ENCODE measurements at regions of chr15 and their contacts with region 1.

Region 1: GRCh38 chr15:44633603-44634002 is 29.9 kb downstream of the SPG11 start:
- DNase-seq: no peak
- ATAC-seq: no peak
- H3K4me3 Mint-ChIP-seq: peak overlapping the region; percentile 35
- H3K27ac Mint-ChIP-seq: peak overlapping the region; percentile 82
- H3K4me1 Mint-ChIP-seq: peaks cover 8% of the 10 kb centered on the region
- H3K27me3 Mint-ChIP-seq: no peaks in the 10 kb centered on the region
- CTCF ChIP-seq: no peak

Region 2: GRCh38 chr15:44603126-44603525 is 30.5 kb before region 1 on chr15:
- CTCF ChIA-PET with region 1: no interaction called
- POLR2A ChIA-PET with region 1: no interaction called
- intact Hi-C with region 1: loop called (anchors 5 kb)
- DNase-seq: no peak
- ATAC-seq: no peak
- H3K4me3 Mint-ChIP-seq: no peak overlapping the region
- H3K27ac Mint-ChIP-seq: no peak overlapping the region
- H3K4me1 Mint-ChIP-seq: no peaks in the 10 kb centered on the region
- H3K27me3 Mint-ChIP-seq: no peaks in the 10 kb centered on the region
- CTCF ChIP-seq: no peak

Region 3: GRCh38 chr15:44620081-44620480 is 13.5 kb before region 1 on chr15:
- CTCF ChIA-PET with region 1: no interaction called
- POLR2A ChIA-PET with region 1: interaction called, 4 read pairs
- intact Hi-C with region 1: loop called (anchors 2 kb)
- DNase-seq: no peak
- ATAC-seq: no peak
- H3K4me3 Mint-ChIP-seq: no peak overlapping the region
- H3K27ac Mint-ChIP-seq: no peak overlapping the region
- H3K4me1 Mint-ChIP-seq: peaks cover 2% of the 10 kb centered on the region
- H3K27me3 Mint-ChIP-seq: no peaks in the 10 kb centered on the region
- CTCF ChIP-seq: no peak